ENCODE measurements at regions of chr10 and their contacts with region 1.

Region 1: GRCh38 chr10:110547139-110547761 is 20.2 kb upstream of the SMC3 start:
- DNase-seq: peak in 1 of 10 donors; percentile 14
- H3K4me3 ChIP-seq: peak overlapping the region in 1 of 59 donors; percentile 15
- H3K27ac ChIP-seq: peak overlapping the region in 31 of 59 donors; percentile 0 to 83 (median 52)
- H3K27me3 ChIP-seq: peaks cover 0 to 12% (median 0%) of the 10 kb centered on the region in 45 donors
- CTCF ChIP-seq: peak; percentile 78 to 94 (median 86)

Region 2: GRCh38 chr10:110241407-110241806 is 305.8 kb before region 1 on chr10:
- intact Hi-C with region 1: no loop called
- DNase-seq: no peak
- H3K4me3 ChIP-seq: no peak overlapping the region
- H3K27ac ChIP-seq: peak overlapping the region in 6 of 59 donors; percentile 3 to 27 (median 14)
- H3K27me3 ChIP-seq: no peaks in the 10 kb centered on the region
- CTCF ChIP-seq: no peak

Region 3: GRCh38 chr10:110311357-110311949 is 235.8 kb before region 1 on chr10:
- intact Hi-C with region 1: loop called (anchors 2 kb)
- DNase-seq: peak in 4 of 10 donors; percentile 14 to 45 (median 33)
- H3K4me3 ChIP-seq: peak overlapping the region in 1 of 59 donors; percentile 25
- H3K27ac ChIP-seq: no peak overlapping the region
- H3K27me3 ChIP-seq: no peaks in the 10 kb centered on the region
- CTCF ChIP-seq: peak; percentile 43 to 88 (median 75)

Region 4: GRCh38 chr10:110354322-110354766 is 192.9 kb before region 1 on chr10:
- intact Hi-C with region 1: loop called (anchors 2 to 5 kb)
- DNase-seq: peak in 9 of 10 donors; percentile 53 to 86 (median 79)
- H3K4me3 ChIP-seq: no peak overlapping the region
- H3K27ac ChIP-seq: peak overlapping the region in 1 of 59 donors; percentile 79
- H3K27me3 ChIP-seq: peaks cover 0 to 9% (median 0%) of the 10 kb centered on the region in 45 donors
- CTCF ChIP-seq: peak; percentile 29 to 81 (median 69)

Region 5: DNA sequence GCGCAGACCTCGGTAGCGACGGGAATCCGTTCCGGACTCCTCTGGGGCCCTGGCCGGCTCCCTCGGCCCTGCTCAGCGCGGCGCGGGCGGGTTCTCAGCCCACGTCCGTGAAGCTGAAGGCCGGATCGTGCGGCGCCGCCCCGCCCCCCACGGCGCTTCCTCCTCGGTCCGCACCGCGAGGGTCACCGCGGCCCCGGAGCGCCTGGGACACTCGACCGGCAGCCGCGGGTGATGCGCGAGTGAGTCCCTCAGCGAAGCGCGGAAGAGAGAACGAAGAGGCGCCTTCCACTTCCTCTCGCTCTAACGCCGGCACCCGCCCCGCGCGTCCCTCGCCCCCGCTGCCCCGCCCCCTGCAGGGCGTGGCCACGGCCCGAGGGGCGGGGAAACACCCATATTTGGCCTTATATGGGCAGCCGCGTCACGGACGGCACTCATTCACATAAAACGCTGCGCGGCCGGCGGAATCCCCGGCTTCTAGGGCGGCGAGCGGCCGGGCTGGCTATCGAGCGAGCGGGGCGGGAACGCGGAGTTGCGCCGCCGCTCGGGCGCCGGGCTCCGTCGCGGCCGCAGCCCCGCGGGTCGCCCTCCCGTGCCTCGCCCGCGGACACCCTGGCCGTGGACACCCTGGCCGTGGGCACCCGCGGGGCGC is 49.7 kb before region 1 on chr10 and contains the start of gene DUSP5:
- intact Hi-C with region 1: loop called in 1 of 2 experiments (anchors 5 kb)
- DNase-seq: peak; percentile 81 to 97 (median 92)
- H3K4me3 ChIP-seq: peak within 1 kb of the TSS; percentile 50 to 88 (median 80)
- H3K27ac ChIP-seq: peak within 1 kb of the TSS in 58 of 59 donors; percentile 13 to 93 (median 78)
- H3K27me3 ChIP-seq: peaks cover 0 to 22% (median 0%) of the 10 kb centered on the region in 45 donors
- CTCF ChIP-seq: peak in 23 of 56 donors; percentile 5 to 43 (median 22)
- total RNA-seq, gene DUSP5: 3.1 to 34.1 (median 7.7) TPM

Region 6: DNA sequence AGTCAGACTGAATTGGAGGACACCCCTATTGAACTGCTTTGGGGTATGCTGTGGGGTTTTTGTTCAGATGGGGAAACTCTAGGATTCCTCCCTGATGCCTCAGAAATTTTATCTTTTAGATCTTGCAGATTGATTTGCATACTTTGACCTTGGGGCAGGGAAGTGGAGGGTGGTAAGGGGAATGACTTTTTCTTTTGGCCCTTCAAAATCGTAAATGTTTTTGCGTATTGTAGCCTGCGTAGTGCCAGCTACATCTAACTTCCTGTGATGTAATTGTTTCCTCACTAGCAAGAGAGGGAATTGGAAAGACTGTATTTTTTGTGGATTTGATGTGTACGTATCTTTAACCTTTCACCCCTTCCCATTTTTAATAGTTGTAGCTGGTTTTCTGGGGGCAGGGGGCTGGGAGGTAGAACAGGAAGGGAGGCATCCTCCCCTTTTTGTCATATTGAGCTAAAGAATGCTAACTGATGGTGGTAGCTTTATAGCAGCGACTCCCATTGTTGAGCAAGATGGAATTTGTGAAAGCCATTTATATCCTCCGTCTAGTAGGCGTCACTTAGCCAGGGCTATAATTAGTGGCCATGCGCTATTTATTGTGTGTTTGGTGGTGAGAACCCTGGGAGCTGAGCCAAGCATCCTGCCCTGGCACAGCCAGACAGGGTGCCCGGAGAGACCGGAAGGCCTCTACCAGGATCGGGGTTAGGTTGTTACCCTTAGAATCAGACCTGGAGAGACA is 38.3 kb before region 1 on chr10:
- intact Hi-C with region 1: loop called in 1 of 2 experiments (anchors 5 kb)
- DNase-seq: peak in 1 of 10 donors; percentile 63
- H3K4me3 ChIP-seq: no peak overlapping the region
- H3K27ac ChIP-seq: peak overlapping the region in 3 of 59 donors; percentile 4 to 85 (median 30)
- H3K27me3 ChIP-seq: peaks cover 0 to 18% (median 0%) of the 10 kb centered on the region in 45 donors
- CTCF ChIP-seq: no peak

Measured in dorsolateral prefrontal cortex (tissue), 120 donors.